ENCODE measurements at regions of chr1 and their contacts with region 1.

Region 1: GRCh38 chr1:162854245-162854882 is 6.6 kb downstream of the CCDC190 start:
- DNase-seq: peak; percentile 88
- H3K4me3 Mint-ChIP-seq: no peak overlapping the region
- H3K27ac Mint-ChIP-seq: no peak overlapping the region
- H3K4me1 Mint-ChIP-seq: peaks cover 32% of the 10 kb centered on the region
- H3K27me3 Mint-ChIP-seq: peaks cover 33% of the 10 kb centered on the region
- CTCF ChIP-seq: peak; percentile 71

Region 2: GRCh38 chr1:162840250-162840839 is 14.0 kb before region 1 on chr1:
- CTCF ChIA-PET with region 1: interaction called, 107 read pairs
- POLR2A ChIA-PET with region 1: no interaction called
- intact Hi-C with region 1: no loop called
- DNase-seq: peak; percentile 10
- H3K4me3 Mint-ChIP-seq: no peak overlapping the region
- H3K27ac Mint-ChIP-seq: no peak overlapping the region
- H3K4me1 Mint-ChIP-seq: no peaks in the 10 kb centered on the region
- H3K27me3 Mint-ChIP-seq: peaks cover 36% of the 10 kb centered on the region
- CTCF ChIP-seq: no peak

Region 3: DNA sequence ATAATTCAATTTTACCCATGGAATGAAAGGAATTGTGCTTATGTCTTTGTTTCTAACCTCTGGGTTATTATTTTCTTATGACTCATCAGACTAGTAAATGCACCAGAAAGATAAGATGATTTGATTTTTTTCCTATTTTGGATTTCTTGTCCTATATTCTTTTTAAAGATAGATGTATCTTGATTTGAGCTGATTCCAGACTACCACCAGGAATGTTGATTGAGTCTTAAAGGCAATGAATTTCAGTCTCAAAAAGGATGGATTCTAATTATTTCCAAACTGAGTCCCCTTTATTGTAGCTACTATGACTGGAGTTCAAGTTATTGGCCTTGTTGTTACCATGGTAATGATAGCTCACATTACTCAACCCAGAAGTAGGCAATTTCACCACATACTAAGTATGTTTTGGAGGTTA is 119.0 kb after region 1 on chr1:
- CTCF ChIA-PET with region 1: no interaction called
- POLR2A ChIA-PET with region 1: no interaction called
- intact Hi-C with region 1: no loop called
- DNase-seq: peak; percentile 33
- H3K4me3 Mint-ChIP-seq: no peak overlapping the region
- H3K27ac Mint-ChIP-seq: no peak overlapping the region
- H3K4me1 Mint-ChIP-seq: no peaks in the 10 kb centered on the region
- H3K27me3 Mint-ChIP-seq: no peaks in the 10 kb centered on the region
- CTCF ChIP-seq: no peak

Region 4: GRCh38 chr1:163168053-163168452 is 313.7 kb after region 1 on chr1:
- CTCF ChIA-PET with region 1: interaction called, 11 read pairs
- POLR2A ChIA-PET with region 1: no interaction called
- intact Hi-C with region 1: no loop called
- DNase-seq: peak; percentile 97
- H3K4me3 Mint-ChIP-seq: no peak overlapping the region
- H3K27ac Mint-ChIP-seq: no peak overlapping the region
- H3K4me1 Mint-ChIP-seq: peaks cover 23% of the 10 kb centered on the region
- H3K27me3 Mint-ChIP-seq: no peaks in the 10 kb centered on the region
- CTCF ChIP-seq: no peak

Region 5: DNA sequence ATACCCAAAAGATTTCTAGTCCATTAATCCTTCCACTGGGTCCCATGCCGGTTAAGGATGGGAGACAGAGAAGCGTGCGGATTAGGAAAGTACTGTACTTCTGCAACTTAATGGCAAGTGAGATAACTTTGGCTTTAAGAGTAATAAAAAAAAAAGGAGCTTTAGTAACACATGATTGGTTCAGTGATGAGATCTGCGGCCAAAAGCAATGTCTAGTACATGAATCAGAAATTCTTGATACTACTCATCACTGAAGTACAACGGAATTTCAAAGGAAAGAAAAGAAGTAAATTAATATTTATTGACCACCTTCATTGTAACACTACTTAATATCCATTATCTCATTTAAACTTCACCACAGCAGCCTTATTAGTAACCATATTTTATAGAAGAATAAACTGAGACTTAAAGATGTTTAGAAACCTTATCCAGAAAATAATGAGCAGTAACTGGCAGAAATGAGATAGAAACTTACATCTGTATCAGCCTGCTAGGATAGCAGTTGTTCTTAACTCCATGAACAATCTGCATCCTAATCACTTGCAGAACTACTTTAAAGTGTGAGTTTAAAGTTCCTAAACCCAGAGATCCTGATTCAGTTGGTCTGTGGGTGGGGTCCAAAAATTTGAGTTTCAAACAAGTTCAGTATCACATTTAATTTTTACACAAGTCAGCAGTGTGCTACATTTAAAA is 453.3 kb after region 1 on chr1:
- CTCF ChIA-PET with region 1: interaction called, 84 read pairs
- POLR2A ChIA-PET with region 1: no interaction called
- intact Hi-C with region 1: no loop called
- DNase-seq: peak; percentile 39
- H3K4me3 Mint-ChIP-seq: no peak overlapping the region
- H3K27ac Mint-ChIP-seq: no peak overlapping the region
- H3K4me1 Mint-ChIP-seq: no peaks in the 10 kb centered on the region
- H3K27me3 Mint-ChIP-seq: no peaks in the 10 kb centered on the region
- CTCF ChIP-seq: no peak

Region 6: GRCh38 chr1:163321311-163322305 is 467.2 kb after region 1 on chr1 and contains the start of gene NUF2:
- CTCF ChIA-PET with region 1: interaction called, 84 read pairs
- POLR2A ChIA-PET with region 1: interaction called, 5 read pairs
- intact Hi-C with region 1: loop called (anchors 1 kb)
- DNase-seq: peak; percentile 100
- H3K4me3 Mint-ChIP-seq: peak within 1 kb of the TSS; percentile 95
- H3K27ac Mint-ChIP-seq: peak within 1 kb of the TSS; percentile 98
- H3K4me1 Mint-ChIP-seq: peaks cover 26% of the 10 kb centered on the region
- H3K27me3 Mint-ChIP-seq: no peaks in the 10 kb centered on the region
- CTCF ChIP-seq: no peak
- total RNA-seq, gene NUF2: 14.7 and 23.8 TPM in 2 replicates